ENCODE measurements at regions of chr2 and their contacts with region 1.

Region 1: DNA sequence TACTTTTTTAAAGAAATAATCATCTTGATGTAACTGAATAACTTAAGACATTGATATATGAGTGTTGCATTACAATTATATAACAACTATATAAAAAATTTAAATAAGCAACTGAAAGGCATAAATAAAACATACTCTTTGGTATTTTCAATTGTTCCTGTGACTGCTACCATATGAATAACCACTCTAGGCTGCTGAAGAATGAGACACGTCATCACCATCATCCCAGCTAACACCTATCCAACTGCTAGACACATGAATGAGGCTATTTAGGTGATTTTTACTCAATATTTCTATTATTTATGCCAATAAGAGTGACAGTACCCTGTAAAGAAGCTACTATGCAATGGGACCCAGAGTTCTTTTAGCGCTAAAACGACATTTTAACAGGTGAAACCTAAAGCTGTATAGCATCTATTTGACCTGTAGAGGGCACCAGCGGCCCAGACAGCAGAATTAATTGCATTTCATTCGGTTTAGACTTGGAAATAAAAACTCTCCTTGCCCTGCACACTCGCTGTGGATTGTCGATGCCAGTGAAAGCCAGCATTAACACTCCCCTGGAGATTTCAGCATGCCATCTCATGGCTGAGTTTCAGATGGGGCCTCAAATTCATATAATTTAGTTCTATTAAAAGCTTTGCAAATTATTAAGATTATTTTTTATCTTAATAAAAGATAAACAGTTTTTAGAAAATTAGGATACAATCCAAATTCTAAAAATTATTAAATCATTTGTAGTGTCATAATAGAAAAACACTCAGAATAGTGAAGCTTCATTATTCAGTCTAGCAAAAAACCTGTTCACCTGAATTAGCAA is 89.4 kb upstream of the MAP2 start:
- DNase-seq: peak; percentile 63
- ATAC-seq: peak; percentile 56
- H3K4me3 ChIP-seq: no peak overlapping the region
- H3K4me3 Mint-ChIP-seq: no peak overlapping the region
- H3K27ac ChIP-seq: no peak overlapping the region
- H3K27ac Mint-ChIP-seq: no peak overlapping the region
- H3K4me1 ChIP-seq: peaks cover 0 to 3% of the 10 kb centered on the region in 2 donors
- H3K4me1 Mint-ChIP-seq: no peaks in the 10 kb centered on the region
- H3K27me3 ChIP-seq: no peaks in the 10 kb centered on the region
- H3K27me3 Mint-ChIP-seq: peaks cover 4% of the 10 kb centered on the region
- CTCF ChIP-seq: peak; percentile 93

Region 2: DNA sequence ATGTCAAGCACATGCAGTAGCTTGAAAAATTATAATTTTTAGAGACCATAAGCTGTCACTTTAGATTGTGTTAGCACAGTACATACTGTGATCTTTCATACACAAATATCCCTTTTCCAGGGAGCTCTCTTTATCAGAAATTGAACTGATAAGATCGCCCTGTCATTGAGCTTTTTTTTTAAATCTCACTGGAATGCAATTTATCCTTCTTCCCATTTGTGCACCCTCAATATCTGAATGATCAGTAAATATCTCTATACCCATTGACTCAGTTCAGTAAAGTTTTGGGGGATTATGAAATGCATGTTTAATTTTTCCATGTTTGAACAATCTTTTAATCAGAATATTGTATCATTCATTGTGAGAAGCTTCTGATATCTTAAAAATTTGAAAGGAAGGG is 318.2 kb before region 1 on chr2:
- CTCF ChIA-PET with region 1: no interaction called
- POLR2A ChIA-PET with region 1: no interaction called
- intact Hi-C with region 1: no loop called
- DNase-seq: no peak
- ATAC-seq: no peak
- H3K4me3 ChIP-seq: no peak overlapping the region
- H3K4me3 Mint-ChIP-seq: no peak overlapping the region
- H3K27ac ChIP-seq: no peak overlapping the region
- H3K27ac Mint-ChIP-seq: no peak overlapping the region
- H3K4me1 ChIP-seq: no peaks in the 10 kb centered on the region
- H3K4me1 Mint-ChIP-seq: no peaks in the 10 kb centered on the region
- H3K27me3 ChIP-seq: no peaks in the 10 kb centered on the region
- H3K27me3 Mint-ChIP-seq: no peaks in the 10 kb centered on the region
- CTCF ChIP-seq: no peak

Region 3: GRCh38 chr2:209322041-209322440 is 12.4 kb before region 1 on chr2:
- CTCF ChIA-PET with region 1: interaction called, 36 read pairs
- POLR2A ChIA-PET with region 1: no interaction called
- intact Hi-C with region 1: no loop called
- DNase-seq: no peak
- ATAC-seq: no peak
- H3K4me3 ChIP-seq: no peak overlapping the region
- H3K4me3 Mint-ChIP-seq: no peak overlapping the region
- H3K27ac ChIP-seq: no peak overlapping the region
- H3K27ac Mint-ChIP-seq: no peak overlapping the region
- H3K4me1 ChIP-seq: no peaks in the 10 kb centered on the region
- H3K4me1 Mint-ChIP-seq: no peaks in the 10 kb centered on the region
- H3K27me3 ChIP-seq: no peaks in the 10 kb centered on the region
- H3K27me3 Mint-ChIP-seq: peaks cover 8% of the 10 kb centered on the region
- CTCF ChIP-seq: no peak

Region 4: DNA sequence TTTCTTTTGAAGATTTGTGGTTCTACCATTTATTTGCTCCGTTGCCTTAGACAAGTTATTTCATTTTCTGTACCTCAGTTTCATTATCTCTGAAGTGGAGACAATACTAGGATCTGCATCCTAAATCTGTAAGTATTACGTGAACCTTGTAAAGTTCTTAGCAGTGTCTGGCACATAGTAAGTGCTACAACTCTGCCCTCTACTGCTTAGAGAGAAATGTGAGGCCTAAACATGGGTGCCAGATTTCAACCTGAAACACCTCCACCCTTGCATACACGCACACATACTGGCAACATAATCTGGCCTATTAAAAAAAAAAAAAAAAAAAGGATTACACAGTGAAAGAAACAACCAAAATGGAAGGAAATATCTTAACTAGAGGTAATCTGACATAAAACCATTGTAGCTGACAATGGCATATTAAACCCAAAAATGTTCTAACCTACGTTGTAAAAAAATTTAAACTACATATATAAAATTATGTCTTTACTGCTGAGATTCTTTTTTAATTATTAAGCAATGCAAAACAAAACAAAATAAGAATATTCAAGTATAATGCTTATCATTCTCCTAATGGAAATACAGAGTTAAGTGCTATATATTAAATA is 222.1 kb after region 1 on chr2:
- CTCF ChIA-PET with region 1: interaction called, 48 read pairs
- POLR2A ChIA-PET with region 1: no interaction called
- intact Hi-C with region 1: no loop called
- DNase-seq: peak; percentile 50
- ATAC-seq: no peak
- H3K4me3 ChIP-seq: no peak overlapping the region
- H3K4me3 Mint-ChIP-seq: no peak overlapping the region
- H3K27ac ChIP-seq: no peak overlapping the region
- H3K27ac Mint-ChIP-seq: no peak overlapping the region
- H3K4me1 ChIP-seq: no peaks in the 10 kb centered on the region
- H3K4me1 Mint-ChIP-seq: peaks cover 5% of the 10 kb centered on the region
- H3K27me3 ChIP-seq: no peaks in the 10 kb centered on the region
- H3K27me3 Mint-ChIP-seq: no peaks in the 10 kb centered on the region
- CTCF ChIP-seq: peak; percentile 58

Region 5: DNA sequence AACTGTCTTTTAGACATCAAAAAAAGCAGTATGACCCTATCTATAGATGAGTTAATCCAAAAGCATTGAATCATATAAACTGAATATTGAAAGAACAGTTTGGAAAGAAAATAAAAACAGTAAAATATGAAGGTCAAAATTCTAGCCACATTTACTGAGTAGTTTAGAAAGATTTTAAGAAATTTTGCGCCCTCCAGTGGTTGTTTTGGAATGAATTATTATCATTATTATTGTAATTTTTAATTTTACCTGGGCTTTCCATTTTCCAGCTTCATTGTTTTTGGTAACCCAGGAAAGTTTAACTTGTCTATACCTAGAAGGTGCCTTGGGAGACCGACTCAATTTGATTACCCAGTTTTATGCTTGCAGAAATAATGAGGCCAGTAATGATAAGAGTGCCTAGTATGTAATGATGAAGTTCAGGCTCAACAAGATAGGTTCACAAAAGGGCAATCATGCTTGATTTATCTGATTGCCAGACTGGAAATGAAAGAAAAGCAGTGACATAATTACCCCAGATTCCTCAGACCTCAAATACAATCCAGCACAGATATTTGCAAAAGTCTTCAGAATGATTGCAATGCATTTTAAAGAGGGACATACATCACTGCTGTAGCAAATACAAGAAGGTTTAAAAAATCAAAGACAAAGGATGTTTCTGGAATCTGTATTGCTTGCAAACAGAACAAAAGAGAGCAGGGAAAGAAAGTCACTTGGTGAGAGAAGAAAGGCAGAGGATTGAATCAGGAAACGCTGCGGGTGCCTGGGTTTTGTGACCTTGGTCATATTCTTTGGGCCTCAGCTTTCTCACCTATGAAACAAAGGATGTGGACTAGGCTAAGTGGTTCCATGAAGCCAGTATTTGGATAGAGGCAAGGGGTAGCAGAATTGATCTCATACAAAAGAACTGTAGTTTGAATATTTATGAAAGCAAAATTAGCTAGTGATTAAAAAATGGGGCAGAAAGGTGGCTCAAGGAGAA is 243.3 kb after region 1 on chr2:
- CTCF ChIA-PET with region 1: interaction called, 84 read pairs
- POLR2A ChIA-PET with region 1: no interaction called
- intact Hi-C with region 1: loop called (anchors 1 kb)
- DNase-seq: peak; percentile 30
- ATAC-seq: no peak
- H3K4me3 ChIP-seq: no peak overlapping the region
- H3K4me3 Mint-ChIP-seq: no peak overlapping the region
- H3K27ac ChIP-seq: no peak overlapping the region
- H3K27ac Mint-ChIP-seq: no peak overlapping the region
- H3K4me1 ChIP-seq: peaks cover 6% of the 10 kb centered on the region in 2 donors
- H3K4me1 Mint-ChIP-seq: peaks cover 11% of the 10 kb centered on the region
- H3K27me3 ChIP-seq: no peaks in the 10 kb centered on the region
- H3K27me3 Mint-ChIP-seq: no peaks in the 10 kb centered on the region
- CTCF ChIP-seq: peak; percentile 76

Region 6: GRCh38 chr2:209960676-209961630 is 626.5 kb after region 1 on chr2:
- CTCF ChIA-PET with region 1: interaction called, 38 read pairs
- POLR2A ChIA-PET with region 1: no interaction called
- intact Hi-C with region 1: no loop called
- DNase-seq: peak; percentile 50
- ATAC-seq: peak; percentile 58
- H3K4me3 ChIP-seq: no peak overlapping the region
- H3K4me3 Mint-ChIP-seq: no peak overlapping the region
- H3K27ac ChIP-seq: no peak overlapping the region
- H3K27ac Mint-ChIP-seq: no peak overlapping the region
- H3K4me1 ChIP-seq: no peaks in the 10 kb centered on the region
- H3K4me1 Mint-ChIP-seq: no peaks in the 10 kb centered on the region
- H3K27me3 ChIP-seq: peaks cover 0 to 4% (median 0%) of the 10 kb centered on the region in 4 experiments
- H3K27me3 Mint-ChIP-seq: peaks cover 16% of the 10 kb centered on the region
- CTCF ChIP-seq: peak; percentile 78

Region 7: GRCh38 chr2:210195101-210195852 is 860.9 kb after region 1 on chr2:
- CTCF ChIA-PET with region 1: interaction called, 10 read pairs
- POLR2A ChIA-PET with region 1: no interaction called
- intact Hi-C with region 1: no loop called
- DNase-seq: peak; percentile 65
- ATAC-seq: peak; percentile 33
- H3K4me3 ChIP-seq: no peak overlapping the region
- H3K4me3 Mint-ChIP-seq: no peak overlapping the region
- H3K27ac ChIP-seq: no peak overlapping the region
- H3K27ac Mint-ChIP-seq: no peak overlapping the region
- H3K4me1 ChIP-seq: no peaks in the 10 kb centered on the region
- H3K4me1 Mint-ChIP-seq: no peaks in the 10 kb centered on the region
- H3K27me3 ChIP-seq: peaks cover 0 to 6% (median 0%) of the 10 kb centered on the region in 4 experiments
- H3K27me3 Mint-ChIP-seq: no peaks in the 10 kb centered on the region
- CTCF ChIP-seq: peak; percentile 84